ENCODE measurements at regions of chr18 and their contacts with region 1.

Region 1: DNA sequence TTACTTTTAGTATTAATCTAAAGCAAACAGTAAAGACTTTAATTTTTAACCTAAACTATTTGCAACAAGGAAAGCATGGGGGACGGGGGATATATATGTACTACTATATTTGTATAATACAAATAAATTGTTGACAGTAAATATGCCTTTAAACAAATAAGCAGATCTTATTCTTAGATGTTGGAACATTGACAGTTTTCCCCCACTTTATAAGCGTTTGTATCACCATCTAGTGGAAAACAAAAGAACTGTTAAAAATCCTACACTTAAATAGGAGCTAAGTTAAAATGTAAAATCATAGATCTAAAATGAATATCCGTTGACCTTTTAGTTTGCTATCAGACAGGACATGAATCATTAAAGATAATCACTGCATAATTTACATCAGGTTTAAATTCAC is 50.0 kb downstream of the RBBP8 start:
- DNase-seq: no peak
- ATAC-seq: no peak

Region 2: DNA sequence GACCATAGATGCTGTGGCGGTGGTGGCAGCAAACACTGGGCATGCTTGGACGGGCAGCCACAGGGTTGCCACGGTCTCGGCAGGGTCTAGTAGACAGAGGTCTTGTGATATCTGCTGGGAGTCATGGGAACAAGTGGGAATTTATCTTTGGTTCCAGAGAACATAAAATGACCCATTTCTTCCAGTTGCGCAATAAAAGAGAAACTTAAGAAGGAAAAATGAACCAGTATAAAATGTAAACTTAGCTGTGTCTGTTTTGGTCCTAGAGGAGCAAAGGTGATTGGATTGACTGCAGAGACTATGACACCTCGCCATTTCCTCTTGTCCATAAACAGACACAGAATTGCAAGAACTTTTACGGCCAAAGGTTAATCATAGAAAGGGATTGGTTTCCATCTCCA is 182.6 kb before region 1 on chr18:
- intact Hi-C with region 1: loop called (anchors 10 kb)
- DNase-seq: no peak
- ATAC-seq: peak; percentile 68

Region 3: GRCh38 chr18:22933206-22933957 is 49.8 kb before region 1 on chr18 and contains the start of gene RBBP8:
- intact Hi-C with region 1: loop called (anchors 5 kb)
- DNase-seq: peak; percentile 91
- ATAC-seq: peak; percentile 99
- total RNA-seq, gene RBBP8: 4.5 TPM

Region 4: DNA sequence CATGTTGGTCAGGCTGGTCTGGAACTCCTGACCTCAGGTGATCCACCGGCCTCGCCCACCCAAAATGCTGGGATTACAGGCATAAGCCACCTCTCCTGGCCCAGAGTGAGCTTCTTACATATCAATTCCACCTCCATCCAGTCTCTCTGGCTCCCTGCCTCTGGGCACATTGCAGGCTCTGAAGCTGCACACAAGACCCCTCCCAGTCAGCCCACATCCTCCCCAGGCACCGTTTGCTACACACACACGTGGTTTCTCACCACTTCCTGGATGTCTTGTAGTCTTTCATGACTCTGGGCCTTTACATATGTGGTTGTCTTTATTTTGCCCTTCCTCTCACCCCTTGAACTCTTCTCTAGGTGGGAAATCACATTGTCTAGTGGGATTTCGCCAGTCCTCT is 88.1 kb after region 1 on chr18:
- intact Hi-C with region 1: no loop called
- DNase-seq: peak; percentile 49
- ATAC-seq: peak; percentile 34